MCF 10A (cell line): ENCODE measurements at regions of chr12 and their contacts with region 1.

Region 1: DNA sequence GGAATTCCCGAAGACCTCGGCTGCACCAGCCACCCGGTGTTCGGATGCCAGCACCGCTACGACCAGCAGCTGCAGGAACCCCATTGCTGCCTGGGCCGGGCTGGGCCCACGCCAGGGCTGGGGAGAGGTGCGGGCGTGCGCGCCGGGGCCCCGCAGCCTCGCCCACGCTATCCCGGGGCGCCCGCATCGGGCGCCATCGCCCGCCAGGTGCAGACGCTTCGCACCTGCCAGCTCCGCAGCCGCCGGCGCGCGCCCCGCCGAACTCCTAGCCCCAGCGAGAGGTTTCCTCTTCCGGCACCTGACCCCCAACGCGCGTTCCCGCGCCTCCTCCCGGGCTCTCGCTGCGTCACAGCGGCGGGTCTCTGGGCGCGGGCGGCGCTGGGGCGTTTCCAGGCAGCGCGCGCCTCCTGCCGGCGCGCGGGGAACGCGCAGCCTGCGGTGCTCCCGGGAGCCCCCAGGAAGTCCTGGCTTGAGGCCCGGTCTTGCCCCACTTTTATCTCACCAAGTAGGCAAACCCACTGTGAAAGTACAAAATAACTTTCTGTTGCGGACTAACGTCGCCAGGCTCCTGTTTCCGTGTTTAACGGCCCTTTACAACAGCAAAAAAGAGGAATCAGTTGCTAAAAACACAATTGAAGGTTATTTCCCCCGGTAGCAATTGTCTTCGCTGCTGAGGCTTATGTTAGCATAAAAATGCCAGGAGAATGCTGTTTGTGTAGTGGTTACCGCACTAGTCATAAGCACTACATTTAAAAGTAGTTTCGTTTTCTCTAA is at the start of gene TM7SF3:
- DNase-seq: peak; percentile 92
- H3K4me3 Mint-ChIP-seq: peak within 1 kb of the TSS; percentile 89
- H3K27ac Mint-ChIP-seq: peak within 1 kb of the TSS; percentile 92
- H3K4me1 Mint-ChIP-seq: peaks cover 33% of the 10 kb centered on the region
- H3K27me3 Mint-ChIP-seq: no peaks in the 10 kb centered on the region
- CTCF ChIP-seq: peak; percentile 92
- total RNA-seq, gene TM7SF3: 112 and 119 TPM in 2 replicates

Region 2: GRCh38 chr12:26555139-26555538 is 459.1 kb before region 1 on chr12:
- CTCF ChIA-PET with region 1: no interaction called
- POLR2A ChIA-PET with region 1: no interaction called
- intact Hi-C with region 1: no loop called
- DNase-seq: peak; percentile 10
- H3K4me3 Mint-ChIP-seq: no peak overlapping the region
- H3K27ac Mint-ChIP-seq: no peak overlapping the region
- H3K4me1 Mint-ChIP-seq: no peaks in the 10 kb centered on the region
- H3K27me3 Mint-ChIP-seq: no peaks in the 10 kb centered on the region
- CTCF ChIP-seq: no peak

Region 3: DNA sequence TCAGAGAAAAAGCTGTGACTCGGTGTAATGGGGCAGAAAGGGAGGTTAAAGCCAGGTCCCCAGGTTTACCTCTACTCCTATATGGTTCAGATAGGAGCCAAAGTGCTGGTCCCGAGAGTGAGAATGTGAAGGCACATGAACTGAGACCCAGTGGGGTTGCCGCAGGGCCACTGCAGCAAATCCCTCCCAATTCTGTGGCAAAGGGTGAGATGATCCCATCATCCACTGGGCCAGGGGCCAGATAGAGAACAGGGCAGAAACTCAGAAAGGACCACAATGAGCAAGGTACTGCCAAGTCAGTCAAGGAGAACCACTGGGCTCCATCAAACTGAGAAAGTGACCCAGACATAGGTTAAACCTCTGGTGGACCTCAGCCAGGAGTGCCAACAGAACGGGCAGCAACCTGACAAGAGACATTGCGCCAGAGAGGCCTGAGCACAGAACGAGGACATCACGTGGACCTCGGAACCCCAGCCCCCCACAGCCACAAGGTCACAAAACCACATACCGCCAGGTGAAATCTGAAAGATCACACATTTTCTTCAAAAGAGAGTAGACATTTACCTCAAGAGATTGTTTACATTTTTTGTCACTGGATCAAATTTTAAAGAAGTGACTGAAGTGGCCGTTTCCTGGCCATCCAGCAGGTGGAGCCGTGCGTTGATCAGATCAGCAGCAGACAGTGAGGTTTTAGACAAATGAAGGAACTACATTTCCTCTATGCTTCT is 160.8 kb before region 1 on chr12:
- CTCF ChIA-PET with region 1: no interaction called
- POLR2A ChIA-PET with region 1: no interaction called
- intact Hi-C with region 1: loop called (anchors 1 kb)
- DNase-seq: peak; percentile 64
- H3K4me3 Mint-ChIP-seq: no peak overlapping the region
- H3K27ac Mint-ChIP-seq: no peak overlapping the region
- H3K4me1 Mint-ChIP-seq: peaks cover 9% of the 10 kb centered on the region
- H3K27me3 Mint-ChIP-seq: no peaks in the 10 kb centered on the region
- CTCF ChIP-seq: peak; percentile 76

Region 4: DNA sequence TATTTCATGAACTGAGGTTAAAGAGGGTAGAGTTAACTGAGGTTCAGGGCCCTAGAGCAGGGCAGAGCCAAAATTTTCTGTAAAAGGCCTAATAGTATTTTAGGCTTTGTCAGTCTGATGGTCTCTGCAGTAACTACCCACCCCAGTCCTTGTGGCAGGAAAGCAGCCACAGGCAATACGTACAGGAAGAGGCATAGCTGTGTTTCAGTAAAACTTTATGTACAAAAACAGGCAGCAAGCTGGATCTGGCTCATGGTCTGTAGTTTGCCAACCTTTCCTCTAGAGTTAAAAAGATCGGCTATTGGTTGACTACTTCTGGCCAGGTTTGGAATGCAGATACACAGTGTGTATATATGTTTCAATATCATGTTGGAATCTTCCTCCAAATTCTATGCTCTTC is 17.3 kb before region 1 on chr12:
- CTCF ChIA-PET with region 1: interaction called, 10 read pairs
- POLR2A ChIA-PET with region 1: interaction called, 27 read pairs
- intact Hi-C with region 1: no loop called
- DNase-seq: no peak
- H3K4me3 Mint-ChIP-seq: no peak overlapping the region
- H3K27ac Mint-ChIP-seq: peak overlapping the region; percentile 21
- H3K4me1 Mint-ChIP-seq: no peaks in the 10 kb centered on the region
- H3K27me3 Mint-ChIP-seq: no peaks in the 10 kb centered on the region
- CTCF ChIP-seq: no peak

Region 5: DNA sequence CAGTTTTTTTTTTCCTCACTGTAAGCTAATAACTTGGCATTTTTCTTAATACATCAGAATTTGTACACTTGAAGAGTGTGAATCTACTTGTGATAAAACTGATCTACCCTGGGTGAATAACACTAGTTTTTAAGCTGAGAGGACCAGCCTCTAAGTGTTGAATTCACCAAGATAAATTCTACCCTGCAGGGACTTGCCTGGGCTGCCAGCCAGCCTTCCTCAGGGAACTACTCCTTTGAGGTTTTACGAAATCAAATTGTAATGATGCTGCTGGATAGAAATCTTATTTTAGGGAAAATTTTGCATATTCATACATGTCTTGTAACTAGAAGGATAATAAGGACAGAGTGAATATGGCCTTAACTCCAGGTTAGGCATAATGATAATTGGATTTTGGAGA is 10.0 kb after region 1 on chr12:
- CTCF ChIA-PET with region 1: interaction called, 5 read pairs
- POLR2A ChIA-PET with region 1: interaction called, 91 read pairs
- intact Hi-C with region 1: no loop called
- DNase-seq: no peak
- H3K4me3 Mint-ChIP-seq: no peak overlapping the region
- H3K27ac Mint-ChIP-seq: no peak overlapping the region
- H3K4me1 Mint-ChIP-seq: peaks cover 21% of the 10 kb centered on the region
- H3K27me3 Mint-ChIP-seq: no peaks in the 10 kb centered on the region
- CTCF ChIP-seq: no peak

Region 6: DNA sequence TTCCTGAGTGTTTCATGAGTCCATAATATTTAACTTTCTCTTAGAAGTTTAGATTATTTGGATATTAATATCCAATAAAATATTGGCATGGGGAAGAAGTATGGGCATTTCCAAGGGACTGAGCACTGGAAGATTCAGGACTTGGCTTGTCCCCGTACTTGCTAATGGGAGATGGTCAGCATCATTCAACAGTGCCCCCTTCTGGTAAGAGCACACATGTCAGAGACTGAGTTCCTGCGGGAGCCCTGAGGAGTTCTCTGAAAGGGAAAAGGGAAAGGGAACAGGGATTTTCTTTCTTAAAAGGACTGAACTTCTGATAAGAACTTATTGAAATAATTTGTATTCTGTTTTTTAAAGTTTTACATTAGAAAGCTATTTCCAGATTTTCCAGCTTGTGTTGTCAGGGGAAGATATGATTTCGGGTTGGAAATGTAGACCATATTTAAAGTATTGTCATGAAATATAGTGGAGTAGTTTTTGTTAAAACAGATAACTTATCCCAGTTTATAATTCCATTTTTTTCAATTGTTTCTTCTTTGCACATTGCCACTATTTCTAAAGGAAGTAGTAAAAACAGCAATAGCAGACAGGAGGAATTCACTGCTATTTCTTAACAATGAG is 127.9 kb after region 1 on chr12:
- CTCF ChIA-PET with region 1: interaction called, 7 read pairs
- POLR2A ChIA-PET with region 1: interaction called, 8 read pairs
- intact Hi-C with region 1: loop called (anchors 1 kb)
- DNase-seq: peak; percentile 84
- H3K4me3 Mint-ChIP-seq: no peak overlapping the region
- H3K27ac Mint-ChIP-seq: peak overlapping the region; percentile 41
- H3K4me1 Mint-ChIP-seq: no peaks in the 10 kb centered on the region
- H3K27me3 Mint-ChIP-seq: no peaks in the 10 kb centered on the region
- CTCF ChIP-seq: peak; percentile 73

Region 7: DNA sequence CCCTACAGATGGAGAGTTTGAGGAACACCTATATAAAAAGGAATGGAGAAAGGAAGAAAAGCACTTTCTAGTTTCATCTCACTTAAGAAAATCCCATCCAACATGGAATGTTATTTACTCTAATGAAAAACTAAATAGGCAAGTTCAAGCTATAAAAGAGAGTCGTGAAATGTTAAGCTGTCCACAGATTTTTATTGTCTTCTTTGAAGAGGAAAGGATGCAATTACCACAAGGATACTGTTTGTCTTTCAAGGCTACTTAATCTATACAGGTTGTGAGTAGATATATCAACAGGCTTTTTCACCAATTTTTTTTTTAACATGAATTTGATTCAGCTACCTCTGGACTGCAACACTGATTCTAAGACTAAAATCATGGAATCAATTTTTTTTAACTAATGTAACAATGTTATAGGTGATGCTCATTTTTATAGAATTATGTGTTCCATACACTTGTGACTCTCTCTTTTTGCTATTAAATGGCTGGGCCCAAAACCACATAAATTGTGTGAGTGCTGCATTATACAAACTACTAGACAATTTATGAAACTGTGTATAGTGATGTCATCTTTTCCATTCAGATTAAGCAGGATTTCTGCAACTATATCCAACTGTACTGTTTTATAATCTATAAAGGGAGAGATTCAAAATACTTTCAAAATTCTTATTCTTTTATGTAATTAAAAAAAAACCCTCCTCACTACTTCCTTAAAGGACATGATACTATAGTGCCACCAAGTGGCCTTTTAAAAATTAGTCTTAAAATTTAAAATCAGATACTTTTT is 291.6 kb after region 1 on chr12:
- CTCF ChIA-PET with region 1: interaction called, 26 read pairs
- POLR2A ChIA-PET with region 1: interaction called, 14 read pairs
- intact Hi-C with region 1: loop called (anchors 1 kb)
- DNase-seq: peak; percentile 44
- H3K4me3 Mint-ChIP-seq: no peak overlapping the region
- H3K27ac Mint-ChIP-seq: no peak overlapping the region
- H3K4me1 Mint-ChIP-seq: peaks cover 10% of the 10 kb centered on the region
- H3K27me3 Mint-ChIP-seq: no peaks in the 10 kb centered on the region
- CTCF ChIP-seq: peak; percentile 50

Region 8: DNA sequence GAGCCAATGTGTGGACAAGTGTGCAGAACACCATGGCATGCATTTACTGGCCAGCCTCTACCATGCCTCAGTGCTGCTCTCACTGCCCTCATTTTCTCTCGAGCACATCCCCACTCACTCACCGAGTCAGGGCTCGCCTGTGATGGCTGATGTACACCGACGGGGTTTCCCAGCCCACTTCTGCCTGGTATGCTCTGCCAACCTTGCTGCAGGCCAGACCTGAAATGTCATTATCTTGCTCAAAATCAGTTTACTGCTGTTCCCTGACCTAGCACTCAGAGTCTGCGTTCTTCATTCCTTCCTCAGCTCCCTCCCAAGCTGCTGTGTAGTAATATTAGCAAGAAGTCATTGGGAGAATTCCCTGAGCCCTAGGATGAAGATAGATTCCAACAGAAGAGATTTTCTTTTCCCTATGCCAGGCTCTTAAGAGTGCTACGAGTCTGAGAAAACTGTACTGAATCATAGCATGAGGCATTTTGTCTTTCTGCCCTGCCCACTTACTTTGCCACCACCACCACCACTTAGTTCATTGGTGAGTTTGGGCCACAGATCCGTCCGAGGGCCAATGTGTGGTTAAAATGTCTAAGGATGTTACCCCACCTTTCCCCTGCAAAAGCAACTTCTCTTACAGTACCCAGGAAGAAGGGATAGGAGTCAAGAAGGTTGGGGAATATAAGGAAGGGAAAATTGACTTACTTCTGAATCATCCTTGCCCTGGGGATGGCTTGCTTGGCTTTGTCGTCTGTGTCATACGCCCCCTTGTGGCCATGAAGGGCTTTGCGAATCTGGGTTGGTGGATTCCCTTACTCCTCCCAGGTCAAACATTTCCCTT is 369.4 kb after region 1 on chr12:
- CTCF ChIA-PET with region 1: interaction called, 3 read pairs
- POLR2A ChIA-PET with region 1: no interaction called
- intact Hi-C with region 1: loop called (anchors 10 kb)
- DNase-seq: peak; percentile 88
- H3K4me3 Mint-ChIP-seq: no peak overlapping the region
- H3K27ac Mint-ChIP-seq: peak overlapping the region; percentile 68
- H3K4me1 Mint-ChIP-seq: no peaks in the 10 kb centered on the region
- H3K27me3 Mint-ChIP-seq: no peaks in the 10 kb centered on the region
- CTCF ChIP-seq: peak; percentile 76